ENCODE measurements at regions of chr14 and their contacts with region 1.

Region 1: GRCh38 chr14:29741909-29742401 is 185.7 kb downstream of the PRKD1 start:
- DNase-seq: no peak
- ATAC-seq: peak; percentile 74 to 77

Region 2: GRCh38 chr14:29102996-29103395 is 639.0 kb before region 1 on chr14:
- intact Hi-C with region 1: no loop called
- DNase-seq: no peak
- ATAC-seq: no peak

Region 3: DNA sequence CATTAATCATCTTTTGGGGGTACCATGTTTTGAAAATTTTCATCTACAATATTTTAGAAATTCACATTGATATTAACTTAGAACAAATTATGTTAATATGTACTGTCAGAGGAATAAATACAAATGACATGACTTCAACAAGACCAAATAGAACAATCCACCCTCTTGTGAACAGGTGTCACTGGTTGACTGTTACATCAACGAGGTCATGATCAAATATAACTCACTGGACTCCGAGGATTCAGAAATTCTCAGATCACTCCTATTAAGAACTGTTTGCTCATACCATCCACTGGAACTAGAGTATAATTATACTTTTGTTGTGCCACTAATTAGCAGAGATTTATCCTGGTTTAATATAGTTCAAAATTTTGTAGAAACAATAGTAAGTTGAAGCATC is 133.1 kb before region 1 on chr14:
- intact Hi-C with region 1: no loop called
- DNase-seq: no peak
- ATAC-seq: no peak

Region 4: GRCh38 chr14:29851397-29851796 is 109.4 kb after region 1 on chr14:
- intact Hi-C with region 1: no loop called
- DNase-seq: no peak
- ATAC-seq: no peak

Region 5: GRCh38 chr14:29927376-29928116 is 185.6 kb after region 1 on chr14 and contains the start of gene PRKD1:
- intact Hi-C with region 1: loop called in 1 of 2 experiments (anchors 10 kb)
- DNase-seq: peak; percentile 73
- ATAC-seq: peak; percentile 84 to 89
- total RNA-seq, gene PRKD1: 4.2 to 6.3 TPM

Region 6: DNA sequence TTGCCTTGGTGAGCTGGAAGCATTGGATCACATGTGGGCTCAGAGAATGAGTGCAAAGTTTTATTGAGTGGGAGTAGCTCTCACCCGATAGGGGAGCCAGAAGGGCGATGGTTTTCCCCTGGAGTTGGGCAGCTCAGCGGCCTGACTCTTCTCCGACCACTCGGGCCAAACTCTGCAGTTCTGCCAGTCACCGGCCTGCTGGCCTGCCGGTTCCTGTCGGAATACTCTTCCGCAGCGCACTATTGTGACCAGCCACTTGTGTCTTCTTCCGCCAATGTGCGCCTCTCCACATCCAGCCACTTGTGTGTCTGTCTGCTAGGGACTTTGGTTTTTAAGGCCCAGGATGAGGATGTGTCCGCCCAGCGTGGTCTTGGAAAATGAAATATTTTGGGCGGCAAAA is 229.1 kb after region 1 on chr14:
- intact Hi-C with region 1: no loop called
- DNase-seq: no peak
- ATAC-seq: no peak

Measured in left cardiac atrium (tissue), 4 donors.